K562 (cell line): ENCODE measurements at regions of chr1 and their contacts with region 1.

Region 1: DNA sequence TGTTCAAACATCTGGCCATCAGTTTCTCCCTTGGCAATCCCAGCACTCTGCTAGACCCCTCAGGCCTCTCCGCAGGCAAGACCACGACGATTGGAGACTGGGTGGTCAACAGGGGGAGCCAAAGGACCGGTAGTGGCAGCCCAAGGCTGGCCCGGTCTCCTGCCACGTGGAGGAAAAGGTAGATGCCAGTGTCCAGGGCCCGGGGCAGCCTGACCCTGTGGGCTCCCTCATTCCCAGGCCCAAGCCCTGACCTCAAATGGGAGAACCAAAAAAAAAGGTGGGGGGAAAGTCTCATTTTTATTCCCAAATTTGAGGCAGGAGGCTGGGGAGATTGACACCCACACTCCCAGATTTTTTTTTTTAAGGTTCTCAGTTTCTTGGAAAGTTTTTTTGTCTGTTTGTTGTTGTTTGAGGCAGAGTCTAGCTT is 24.8 kb downstream of the S100A6 start:
- DNase-seq: peak; percentile 85 to 86 (median 86)
- ATAC-seq: peak; percentile 91
- H3K4me3 ChIP-seq: no peak overlapping the region
- H3K27ac ChIP-seq: no peak overlapping the region
- H3K4me1 ChIP-seq: peaks cover 7 to 21% of the 10 kb centered on the region in 2 experiments; a peak in 3 of 5 replicates
- H3K27me3 ChIP-seq: no peaks in the 10 kb centered on the region
- CTCF ChIP-seq: peak; percentile 95 to 96 (median 95)
- EP300 ChIP-seq: no peak
- POLR2A ChIP-seq: no peak
- RAD21 ChIP-seq: peak; percentile 97

Region 2: GRCh38 chr1:153202006-153202405 is 309.0 kb before region 1 on chr1:
- CTCF ChIA-PET with region 1: no interaction called
- POLR2A ChIA-PET with region 1: no interaction called
- in situ Hi-C with region 1: no loop called
- intact Hi-C with region 1: no loop called
- DNase-seq: no peak
- ATAC-seq: no peak
- H3K4me3 ChIP-seq: no peak overlapping the region
- H3K27ac ChIP-seq: no peak overlapping the region
- H3K4me1 ChIP-seq: no peaks in the 10 kb centered on the region
- H3K27me3 ChIP-seq: peaks cover 0 to 16% of the 10 kb centered on the region in 2 experiments; a peak in 4 of 5 replicates
- CTCF ChIP-seq: no peak
- EP300 ChIP-seq: no peak
- POLR2A ChIP-seq: no peak
- RAD21 ChIP-seq: no peak

Region 3: DNA sequence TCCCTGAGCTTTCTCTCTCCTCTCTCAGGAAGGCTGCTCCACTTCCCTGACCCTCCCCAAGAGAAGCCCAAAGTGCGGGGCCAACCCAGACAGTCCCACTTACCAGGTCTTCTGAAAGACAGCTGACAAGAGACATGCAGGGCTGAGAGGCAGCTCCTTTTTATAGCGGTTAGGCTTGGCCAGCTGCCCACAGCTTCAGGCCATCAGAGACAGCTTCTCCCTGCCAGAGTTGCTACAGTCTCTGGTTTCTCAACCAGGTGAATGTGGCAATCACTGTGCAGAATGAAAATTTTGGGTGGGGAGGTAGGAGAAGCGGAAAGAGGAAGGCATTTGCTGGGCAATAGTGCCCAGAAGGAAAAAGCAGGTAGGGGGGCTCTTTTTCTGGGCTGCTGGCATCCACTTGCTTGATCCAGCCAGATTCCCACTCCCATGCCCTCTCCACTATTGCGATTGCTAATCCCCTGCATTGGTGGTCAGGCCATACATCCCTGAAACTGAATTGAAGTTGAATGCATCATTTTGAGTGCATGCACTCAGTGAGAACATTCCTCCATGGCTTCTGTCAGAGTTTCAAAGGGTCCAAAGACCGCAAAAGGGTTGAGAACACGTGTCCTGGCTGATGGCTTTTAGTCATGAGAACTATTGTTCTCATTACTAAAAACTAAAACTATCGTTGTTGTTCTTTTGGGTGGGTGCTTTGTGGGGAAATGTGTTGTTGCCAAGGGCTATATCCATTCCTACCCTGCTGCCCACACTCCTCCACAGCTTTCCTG is 119.9 kb before region 1 on chr1 and contains the start of gene S100A8:
- CTCF ChIA-PET with region 1: no interaction called
- POLR2A ChIA-PET with region 1: no interaction called
- in situ Hi-C with region 1: no loop called
- intact Hi-C with region 1: no loop called
- DNase-seq: no peak
- ATAC-seq: no peak
- H3K4me3 ChIP-seq: no peak within 1 kb of the TSS
- H3K27ac ChIP-seq: no peak within 1 kb of the TSS
- H3K4me1 ChIP-seq: peaks cover 0 to 6% of the 10 kb centered on the region in 2 experiments; a peak in 1 of 5 replicates
- H3K27me3 ChIP-seq: peaks cover 8 to 42% of the 10 kb centered on the region in 2 experiments; a peak in 4 of 5 replicates
- CTCF ChIP-seq: no peak
- EP300 ChIP-seq: no peak
- POLR2A ChIP-seq: no peak
- RAD21 ChIP-seq: no peak
- polyA plus RNA-seq, gene S100A8: 0.15 TPM in 1 of 2 experiments, not detected in the other

Region 4: GRCh38 chr1:153526132-153526543 is 15.1 kb after region 1 on chr1:
- CTCF ChIA-PET with region 1: no interaction called
- POLR2A ChIA-PET with region 1: interaction called, 15 read pairs
- in situ Hi-C with region 1: no loop called
- intact Hi-C with region 1: no loop called
- DNase-seq: peak in 1 of 4 experiments; percentile 62
- ATAC-seq: peak; percentile 71
- H3K4me3 ChIP-seq: no peak overlapping the region
- H3K27ac ChIP-seq: peak overlapping the region; percentile 37; the same call in 1 of the 3 replicates
- H3K4me1 ChIP-seq: peaks cover 17 to 21% of the 10 kb centered on the region in 2 experiments
- H3K27me3 ChIP-seq: no peaks in the 10 kb centered on the region
- CTCF ChIP-seq: no peak
- EP300 ChIP-seq: peak; percentile 68; the same call in 1 of the 2 replicates
- POLR2A ChIP-seq: no peak
- RAD21 ChIP-seq: no peak

Region 5: GRCh38 chr1:153626922-153627796 is 116.2 kb after region 1 on chr1 and contains the start of gene S100A13:
- CTCF ChIA-PET with region 1: no interaction called
- POLR2A ChIA-PET with region 1: interaction called, 11 read pairs
- in situ Hi-C with region 1: no loop called
- intact Hi-C with region 1: no loop called
- DNase-seq: peak; percentile 80 to 96 (median 88)
- ATAC-seq: peak; percentile 93
- H3K4me3 ChIP-seq: peak within 1 kb of the TSS; percentile 49
- H3K27ac ChIP-seq: peak within 1 kb of the TSS; percentile 82
- H3K4me1 ChIP-seq: peaks cover 26 to 44% of the 10 kb centered on the region in 2 experiments
- H3K27me3 ChIP-seq: no peaks in the 10 kb centered on the region
- CTCF ChIP-seq: peak; percentile 85 to 95 (median 89)
- EP300 ChIP-seq: peak; percentile 31; the same call in 1 of the 2 replicates
- POLR2A ChIP-seq: peak; percentile 92
- RAD21 ChIP-seq: peak; percentile 33 to 67; a peak in 3 of 4 replicates
- polyA plus RNA-seq, gene S100A13: 128 to 129 TPM

Region 6: GRCh38 chr1:153749408-153750005 is 238.5 kb after region 1 on chr1:
- CTCF ChIA-PET with region 1: interaction called, 9 read pairs
- POLR2A ChIA-PET with region 1: no interaction called
- in situ Hi-C with region 1: no loop called
- intact Hi-C with region 1: loop called (anchors 1 kb)
- DNase-seq: peak; percentile 80 to 84 (median 82)
- ATAC-seq: peak; percentile 100
- H3K4me3 ChIP-seq: no peak overlapping the region
- H3K27ac ChIP-seq: no peak overlapping the region
- H3K4me1 ChIP-seq: no peaks in the 10 kb centered on the region; a peak in 3 of 5 replicates
- H3K27me3 ChIP-seq: no peaks in the 10 kb centered on the region
- CTCF ChIP-seq: peak; percentile 93 to 95 (median 93)
- EP300 ChIP-seq: no peak
- POLR2A ChIP-seq: no peak
- RAD21 ChIP-seq: peak; percentile 83 to 95

Region 7: GRCh38 chr1:153775458-153776327 is 264.7 kb after region 1 on chr1:
- CTCF ChIA-PET with region 1: interaction called, 4 read pairs
- POLR2A ChIA-PET with region 1: interaction called, 3 read pairs
- in situ Hi-C with region 1: no loop called
- intact Hi-C with region 1: loop called (anchors 10 kb)
- DNase-seq: peak in 3 of 4 experiments; percentile 66 to 77 (median 73)
- ATAC-seq: peak; percentile 73
- H3K4me3 ChIP-seq: peak overlapping the region; percentile 48
- H3K27ac ChIP-seq: no peak overlapping the region
- H3K4me1 ChIP-seq: peaks cover 10 to 55% of the 10 kb centered on the region in 2 experiments
- H3K27me3 ChIP-seq: no peaks in the 10 kb centered on the region
- CTCF ChIP-seq: no peak
- EP300 ChIP-seq: no peak
- POLR2A ChIP-seq: no peak
- RAD21 ChIP-seq: no peak